WTC11 (cell line): ENCODE measurements at regions of chr1 and their contacts with region 1.

Region 1: DNA sequence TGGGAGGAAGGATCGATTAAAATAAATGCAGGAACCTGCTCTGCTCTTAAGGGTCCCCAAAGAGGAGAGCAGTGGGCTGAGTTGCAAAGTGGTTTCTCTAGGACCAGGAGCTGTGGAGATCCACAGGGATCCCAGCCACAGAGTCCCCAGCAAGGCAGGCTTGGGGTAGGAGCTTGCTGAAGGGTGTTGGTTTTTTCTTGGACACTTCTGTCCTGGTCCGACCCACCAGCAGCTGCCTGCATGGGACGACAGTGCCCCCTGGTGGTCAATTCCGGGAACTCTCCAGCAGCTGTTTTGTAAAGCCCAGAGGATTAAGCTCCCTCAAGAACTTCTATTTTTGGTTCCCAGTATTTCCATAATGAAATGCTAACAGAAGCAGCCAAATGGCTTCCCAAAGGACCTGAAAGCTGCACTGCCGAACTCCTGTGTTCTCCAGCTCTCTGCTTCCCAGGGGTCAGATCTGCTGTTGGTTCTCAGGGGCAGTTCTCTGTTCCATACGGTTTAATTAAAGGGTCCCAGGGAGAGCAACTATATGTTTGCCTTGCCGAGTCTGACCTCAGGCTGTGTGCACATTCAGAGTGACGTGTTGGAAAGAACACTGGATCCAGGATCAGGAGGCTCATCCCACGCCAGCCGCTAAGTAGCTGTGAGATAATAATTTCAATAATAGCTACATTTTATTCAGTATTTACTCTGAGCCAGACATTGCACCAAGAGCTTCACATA is 23.2 kb downstream of the NENF start:
- DNase-seq: peak; percentile 93
- ATAC-seq: peak; percentile 79
- H3K4me3 Mint-ChIP-seq: no peak overlapping the region
- H3K27ac Mint-ChIP-seq: no peak overlapping the region
- H3K4me1 Mint-ChIP-seq: no peaks in the 10 kb centered on the region
- H3K27me3 Mint-ChIP-seq: no peaks in the 10 kb centered on the region
- CTCF ChIP-seq: peak; percentile 99

Region 2: GRCh38 chr1:212106286-212106792 is 349.6 kb before region 1 on chr1:
- CTCF ChIA-PET with region 1: interaction called, 13 read pairs
- POLR2A ChIA-PET with region 1: no interaction called
- DNase-seq: no peak
- ATAC-seq: peak; percentile 60
- H3K4me3 Mint-ChIP-seq: peak overlapping the region; percentile 17
- H3K27ac Mint-ChIP-seq: peak overlapping the region; percentile 95
- H3K4me1 Mint-ChIP-seq: peaks cover 54% of the 10 kb centered on the region
- H3K27me3 Mint-ChIP-seq: no peaks in the 10 kb centered on the region
- CTCF ChIP-seq: no peak

Region 3: GRCh38 chr1:212381397-212382035 is 74.5 kb before region 1 on chr1:
- CTCF ChIA-PET with region 1: interaction called, 17 read pairs
- POLR2A ChIA-PET with region 1: no interaction called
- DNase-seq: no peak
- ATAC-seq: no peak; the same call in 1 of the 2 replicates
- H3K4me3 Mint-ChIP-seq: no peak overlapping the region
- H3K27ac Mint-ChIP-seq: no peak overlapping the region
- H3K4me1 Mint-ChIP-seq: peaks cover 3% of the 10 kb centered on the region; the same call in 1 of the 2 replicates
- H3K27me3 Mint-ChIP-seq: no peaks in the 10 kb centered on the region
- CTCF ChIP-seq: no peak

Region 4: GRCh38 chr1:212469701-212470458 is 13.9 kb after region 1 on chr1:
- CTCF ChIA-PET with region 1: interaction called, 51 read pairs
- POLR2A ChIA-PET with region 1: no interaction called
- DNase-seq: no peak
- ATAC-seq: no peak
- H3K4me3 Mint-ChIP-seq: no peak overlapping the region
- H3K27ac Mint-ChIP-seq: 0 out of 2 replicates have a peak overlapping the region, but pooled peaks have one; percentile 76
- H3K4me1 Mint-ChIP-seq: peaks cover 21% of the 10 kb centered on the region
- H3K27me3 Mint-ChIP-seq: no peaks in the 10 kb centered on the region; the same call in none of the 2 replicates
- CTCF ChIP-seq: no peak

Region 5: GRCh38 chr1:212630158-212630900 is 174.4 kb after region 1 on chr1:
- CTCF ChIA-PET with region 1: interaction called, 11 read pairs
- POLR2A ChIA-PET with region 1: no interaction called
- DNase-seq: peak; percentile 73
- ATAC-seq: peak; percentile 99
- H3K4me3 Mint-ChIP-seq: no peak overlapping the region
- H3K27ac Mint-ChIP-seq: no peak overlapping the region
- H3K4me1 Mint-ChIP-seq: no peaks in the 10 kb centered on the region
- H3K27me3 Mint-ChIP-seq: peaks cover 4% of the 10 kb centered on the region
- CTCF ChIP-seq: peak; percentile 87

Region 6: DNA sequence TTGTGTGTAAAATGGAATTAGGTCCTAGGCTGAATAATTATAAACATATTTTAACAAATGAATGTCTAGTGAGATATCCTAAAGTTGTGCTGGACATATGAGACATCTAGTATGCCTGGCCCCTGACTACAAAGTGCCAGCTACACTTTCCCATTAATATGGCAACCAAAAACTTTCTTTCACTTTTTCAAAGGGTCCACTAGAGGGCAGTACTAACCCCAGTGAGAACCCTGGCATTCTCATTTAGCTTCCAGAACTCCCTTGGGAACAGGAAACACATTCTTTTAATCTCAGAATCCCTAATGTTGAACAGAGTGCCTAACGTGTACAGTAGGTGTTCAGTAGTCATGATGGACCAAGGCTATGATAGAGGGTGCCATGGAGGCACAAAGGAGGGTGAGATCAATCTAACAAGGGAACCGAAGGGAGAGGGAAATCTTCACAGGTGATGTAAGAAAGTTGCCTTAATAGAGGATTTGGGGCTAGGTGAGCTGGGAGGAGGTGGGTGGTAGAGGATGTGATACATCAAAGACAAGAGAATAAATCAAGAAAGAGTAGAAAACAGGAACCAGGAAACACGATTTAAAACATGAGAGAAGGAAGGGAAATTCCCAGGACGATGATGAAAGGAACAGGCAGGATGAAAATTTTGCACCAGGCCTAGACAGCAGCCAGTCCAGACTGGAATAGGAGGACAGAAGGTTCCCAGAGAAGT is 294.0 kb after region 1 on chr1:
- CTCF ChIA-PET with region 1: interaction called, 12 read pairs
- POLR2A ChIA-PET with region 1: no interaction called
- DNase-seq: no peak
- ATAC-seq: peak; percentile 61
- H3K4me3 Mint-ChIP-seq: no peak overlapping the region
- H3K27ac Mint-ChIP-seq: peak overlapping the region; percentile 94
- H3K4me1 Mint-ChIP-seq: peaks cover 42% of the 10 kb centered on the region
- H3K27me3 Mint-ChIP-seq: no peaks in the 10 kb centered on the region
- CTCF ChIP-seq: peak; percentile 76